BJ (cell line): ENCODE measurements at regions of chr3 and their contacts with region 1.

Region 1: GRCh38 chr3:72907731-72908620 is 20.1 kb downstream of the GXYLT2 start:
- DNase-seq: peak; percentile 92
- H3K4me3 ChIP-seq: no peak overlapping the region
- H3K27me3 ChIP-seq: no peaks in the 10 kb centered on the region
- CTCF ChIP-seq: no peak

Region 2: DNA sequence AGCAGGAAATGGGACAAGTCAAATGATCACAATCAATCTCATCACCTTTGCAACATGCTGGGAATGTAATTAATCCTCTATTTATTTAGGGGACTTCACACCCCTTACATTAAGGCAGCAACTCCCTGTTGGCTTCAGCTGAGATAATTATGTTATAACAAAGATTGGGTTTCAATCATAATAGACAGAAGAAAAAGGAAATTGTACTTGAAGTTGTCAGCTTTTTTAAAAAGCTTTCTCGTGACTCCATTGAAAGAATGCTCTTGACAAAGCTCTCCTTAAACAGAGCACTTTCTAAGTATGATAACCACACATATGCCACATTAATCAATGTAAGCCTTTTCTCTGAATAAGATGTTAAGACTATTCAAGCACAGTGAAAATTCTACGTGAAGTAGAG is 125.5 kb before region 1 on chr3:
- CTCF ChIA-PET with region 1: no interaction called
- POLR2A ChIA-PET with region 1: no interaction called
- DNase-seq: no peak
- H3K4me3 ChIP-seq: no peak overlapping the region
- H3K27me3 ChIP-seq: no peaks in the 10 kb centered on the region
- CTCF ChIP-seq: no peak

Region 3: GRCh38 chr3:72896996-72897757 is 10.8 kb before region 1 on chr3:
- CTCF ChIA-PET with region 1: interaction called, 10 read pairs
- POLR2A ChIA-PET with region 1: no interaction called
- DNase-seq: peak; percentile 41
- H3K4me3 ChIP-seq: no peak overlapping the region
- H3K27me3 ChIP-seq: no peaks in the 10 kb centered on the region
- CTCF ChIP-seq: no peak

Region 4: GRCh38 chr3:72924055-72924454 is 16.1 kb after region 1 on chr3:
- CTCF ChIA-PET with region 1: interaction called, 11 read pairs
- POLR2A ChIA-PET with region 1: no interaction called
- DNase-seq: no peak
- H3K4me3 ChIP-seq: no peak overlapping the region
- H3K27me3 ChIP-seq: no peaks in the 10 kb centered on the region
- CTCF ChIP-seq: no peak